PC-9 (cell line): ENCODE measurements at regions of chr20 and their contacts with region 1.

Region 1: GRCh38 chr20:14538433-14538832 is 201.0 kb upstream of the FLRT3 start:
- DNase-seq: no peak
- H3K4me3 ChIP-seq: no peak overlapping the region
- H3K27ac ChIP-seq: no peak overlapping the region
- H3K4me1 ChIP-seq: no peaks in the 10 kb centered on the region
- H3K27me3 ChIP-seq: no peaks in the 10 kb centered on the region
- CTCF ChIP-seq: no peak

Region 2: DNA sequence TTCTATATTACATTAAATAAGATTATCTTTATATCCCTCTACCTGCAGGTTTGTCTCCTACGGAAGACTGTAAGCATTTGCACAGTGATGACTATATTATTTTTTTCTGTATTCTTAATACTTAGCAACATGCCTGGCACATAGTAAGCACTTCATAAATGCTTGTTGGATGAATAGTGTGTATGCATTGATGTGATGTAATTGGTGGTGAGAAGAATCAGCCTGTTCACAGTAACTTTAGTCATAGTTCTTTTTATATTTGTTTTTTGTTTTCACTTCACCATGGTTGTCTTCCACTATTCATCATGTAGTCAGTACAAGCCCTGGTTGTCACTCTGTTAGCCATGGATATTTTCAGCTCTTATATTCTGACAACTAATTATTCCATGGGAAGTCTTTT is 17.0 kb before region 1 on chr20:
- CTCF ChIA-PET with region 1: interaction called, 17 read pairs
- POLR2A ChIA-PET with region 1: no interaction called
- intact Hi-C with region 1: no loop called
- DNase-seq: peak in 1 of 2 experiments; percentile 40
- H3K4me3 ChIP-seq: no peak overlapping the region
- H3K27ac ChIP-seq: no peak overlapping the region
- H3K4me1 ChIP-seq: no peaks in the 10 kb centered on the region
- H3K27me3 ChIP-seq: no peaks in the 10 kb centered on the region
- CTCF ChIP-seq: no peak